ENCODE measurements at regions of chr6 and their contacts with region 1.

Region 1: DNA sequence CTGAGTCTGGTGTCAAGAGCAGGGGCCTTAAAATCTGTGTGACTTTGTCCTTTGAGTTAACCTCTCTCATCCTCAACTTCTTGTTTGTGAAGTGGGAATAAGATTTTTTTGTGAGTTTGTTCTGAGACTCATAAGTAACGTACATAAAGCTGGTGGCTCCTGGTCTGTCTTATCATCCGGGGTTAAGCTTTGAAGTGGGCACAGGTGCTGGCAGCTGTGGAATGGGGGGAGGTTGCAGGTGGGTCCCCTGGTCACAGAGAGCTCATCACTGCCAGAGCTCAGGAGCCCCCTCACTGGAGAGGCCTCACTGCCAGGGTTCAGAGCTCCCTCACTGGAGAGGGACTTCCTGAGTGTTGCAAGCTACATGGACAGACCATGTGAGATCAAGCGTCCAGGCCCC is 174.1 kb downstream of the NRN1 start:
- DNase-seq: no peak
- ATAC-seq: no peak
- H3K4me3 ChIP-seq: no peak overlapping the region
- H3K4me3 Mint-ChIP-seq: peak overlapping the region; percentile 26
- H3K27ac ChIP-seq: peak overlapping the region in 1 of 2 experiments; percentile 65
- H3K27ac Mint-ChIP-seq: peak overlapping the region; percentile 85
- H3K4me1 ChIP-seq: peaks cover 46% of the 10 kb centered on the region
- H3K4me1 Mint-ChIP-seq: peaks cover 45% of the 10 kb centered on the region
- H3K27me3 ChIP-seq: no peaks in the 10 kb centered on the region
- H3K27me3 Mint-ChIP-seq: no peaks in the 10 kb centered on the region
- CTCF ChIP-seq: no peak

Region 2: DNA sequence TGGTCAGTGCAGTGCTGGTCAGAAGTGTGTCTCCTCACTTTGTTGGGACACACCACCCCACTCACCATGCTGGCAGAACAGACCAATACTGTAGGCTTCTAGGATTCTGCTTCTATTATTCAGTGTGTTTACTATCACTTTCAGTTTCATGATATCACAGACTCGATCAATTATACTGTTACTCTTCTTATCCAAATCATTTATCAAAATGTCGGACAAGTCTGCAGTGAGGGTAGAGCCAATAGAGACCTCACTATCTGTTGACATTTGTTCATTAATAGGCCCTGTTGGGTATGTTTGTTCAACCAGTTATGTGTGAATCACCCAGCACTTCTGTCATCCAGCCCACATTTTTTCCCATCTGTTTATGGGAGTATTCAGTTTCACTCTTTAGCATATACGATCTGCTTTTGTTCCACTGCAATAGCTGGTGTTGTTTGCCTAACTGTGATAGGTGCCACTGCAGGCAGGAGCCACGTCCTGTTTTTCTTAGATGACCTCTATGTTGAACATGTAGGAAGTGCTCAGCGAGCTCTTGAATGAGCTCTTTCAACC is 34.0 kb after region 1 on chr6:
- CTCF ChIA-PET with region 1: interaction called, 4 read pairs
- POLR2A ChIA-PET with region 1: no interaction called
- intact Hi-C with region 1: loop called in 1 of 2 experiments (anchors 5 kb)
- DNase-seq: peak in 3 of 9 experiments; percentile 30 to 57 (median 54)
- ATAC-seq: peak; percentile 60
- H3K4me3 ChIP-seq: peak overlapping the region; percentile 34 to 35
- H3K4me3 Mint-ChIP-seq: peak overlapping the region; percentile 74
- H3K27ac ChIP-seq: peak overlapping the region; percentile 40 to 85
- H3K27ac Mint-ChIP-seq: peak overlapping the region; percentile 91
- H3K4me1 ChIP-seq: peaks cover 44% of the 10 kb centered on the region
- H3K4me1 Mint-ChIP-seq: peaks cover 52% of the 10 kb centered on the region
- H3K27me3 ChIP-seq: no peaks in the 10 kb centered on the region
- H3K27me3 Mint-ChIP-seq: no peaks in the 10 kb centered on the region
- CTCF ChIP-seq: no peak

Region 3: DNA sequence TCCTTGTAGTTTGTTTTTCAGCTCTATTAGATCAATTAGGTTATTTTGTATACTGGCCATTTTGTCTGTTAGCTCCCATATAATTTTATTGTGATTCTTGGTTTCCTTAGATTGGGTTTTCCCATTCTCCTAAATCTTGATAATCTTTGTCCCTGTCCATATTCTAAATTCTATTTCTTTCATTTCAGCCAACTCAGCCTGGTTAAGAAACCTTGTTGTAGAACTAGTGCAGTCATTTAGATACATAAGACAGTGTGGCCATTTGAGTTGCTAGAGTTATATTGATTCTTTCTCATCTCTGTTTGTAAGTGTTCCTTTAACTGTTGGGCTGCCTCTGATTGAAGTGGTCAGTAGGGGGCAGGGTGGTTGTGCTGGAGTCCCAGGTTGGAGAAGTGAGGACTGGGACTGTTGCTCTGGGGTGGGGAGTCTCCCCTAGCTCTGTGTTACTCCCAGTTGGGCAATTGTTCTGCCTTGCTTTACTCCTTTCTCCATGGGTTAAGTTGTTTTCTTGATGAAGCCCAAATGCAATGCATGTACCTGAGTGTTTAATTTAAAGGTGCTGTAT is 272.9 kb after region 1 on chr6:
- CTCF ChIA-PET with region 1: no interaction called
- POLR2A ChIA-PET with region 1: no interaction called
- intact Hi-C with region 1: no loop called
- DNase-seq: no peak
- ATAC-seq: no peak
- H3K4me3 ChIP-seq: no peak overlapping the region
- H3K4me3 Mint-ChIP-seq: no peak overlapping the region
- H3K27ac ChIP-seq: no peak overlapping the region
- H3K27ac Mint-ChIP-seq: no peak overlapping the region
- H3K4me1 ChIP-seq: no peaks in the 10 kb centered on the region
- H3K4me1 Mint-ChIP-seq: no peaks in the 10 kb centered on the region
- H3K27me3 ChIP-seq: no peaks in the 10 kb centered on the region
- H3K27me3 Mint-ChIP-seq: peaks cover 18% of the 10 kb centered on the region
- CTCF ChIP-seq: no peak

Region 4: GRCh38 chr6:6221787-6222535 is 389.3 kb after region 1 on chr6:
- CTCF ChIA-PET with region 1: no interaction called
- POLR2A ChIA-PET with region 1: no interaction called
- intact Hi-C with region 1: no loop called
- DNase-seq: no peak
- ATAC-seq: no peak
- H3K4me3 ChIP-seq: no peak overlapping the region
- H3K4me3 Mint-ChIP-seq: no peak overlapping the region
- H3K27ac ChIP-seq: no peak overlapping the region
- H3K27ac Mint-ChIP-seq: no peak overlapping the region
- H3K4me1 ChIP-seq: no peaks in the 10 kb centered on the region
- H3K4me1 Mint-ChIP-seq: no peaks in the 10 kb centered on the region
- H3K27me3 ChIP-seq: no peaks in the 10 kb centered on the region
- H3K27me3 Mint-ChIP-seq: peaks cover 25% of the 10 kb centered on the region
- CTCF ChIP-seq: no peak

Measured in CD8-positive, alpha-beta T cell (primary cell).